Caco-2 (cell line): ENCODE measurements at regions of chr4 and their contacts with region 1.

Region 1: GRCh38 chr4:165327211-165328100 is at the start of gene MSMO1:
- DNase-seq: peak; percentile 98 to 99
- H3K4me3 ChIP-seq: peak within 1 kb of the TSS; percentile 79
- H3K4me3 Mint-ChIP-seq: no peak within 1 kb of the TSS
- H3K27ac Mint-ChIP-seq: no peak within 1 kb of the TSS
- H3K4me1 ChIP-seq: peaks cover 29% of the 10 kb centered on the region
- H3K4me1 Mint-ChIP-seq: peaks cover 30% of the 10 kb centered on the region
- H3K27me3 ChIP-seq: no peaks in the 10 kb centered on the region
- H3K27me3 Mint-ChIP-seq: no peaks in the 10 kb centered on the region
- CTCF ChIP-seq: no peak
- total RNA-seq, gene MSMO1: 80.5 and 91.1 TPM in 2 replicates

Region 2: DNA sequence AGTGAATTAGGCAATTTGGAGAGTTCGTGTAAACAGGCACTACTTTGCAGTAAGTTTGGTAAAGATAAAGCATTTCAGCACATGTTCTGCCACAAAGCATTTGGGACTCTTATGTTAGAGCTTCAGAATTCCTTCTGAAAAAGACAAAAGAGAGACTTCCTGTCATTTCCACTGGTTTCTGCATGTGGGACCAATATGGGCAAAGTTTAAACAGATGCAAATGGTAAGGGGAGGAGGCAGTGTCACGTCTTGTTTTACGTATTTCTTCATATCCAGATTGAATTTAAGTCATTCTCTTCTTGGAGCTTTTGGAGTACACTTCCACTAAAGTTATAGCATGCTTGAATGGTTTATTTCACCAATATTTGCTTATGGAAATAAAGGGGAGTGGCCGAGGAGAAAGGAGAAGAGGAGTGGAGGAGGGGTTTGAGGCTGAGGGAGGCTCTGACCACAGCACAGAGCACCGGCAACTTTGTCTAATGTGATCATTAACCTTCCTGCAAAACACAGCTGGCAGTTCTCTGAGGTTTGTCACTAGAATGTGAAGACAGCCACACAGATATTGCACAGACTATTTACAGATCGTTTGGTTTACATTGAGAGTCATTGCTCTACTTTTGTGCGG is 450.6 kb before region 1 on chr4 and contains the start of gene APELA:
- CTCF ChIA-PET with region 1: no interaction called
- POLR2A ChIA-PET with region 1: no interaction called
- intact Hi-C with region 1: loop called (anchors 5 kb)
- DNase-seq: peak; percentile 71 to 74
- H3K4me3 ChIP-seq: peak within 1 kb of the TSS; percentile 26
- H3K4me3 Mint-ChIP-seq: peak within 1 kb of the TSS; percentile 74
- H3K27ac Mint-ChIP-seq: peak within 1 kb of the TSS; percentile 81
- H3K4me1 ChIP-seq: peaks cover 62% of the 10 kb centered on the region
- H3K4me1 Mint-ChIP-seq: peaks cover 26% of the 10 kb centered on the region
- H3K27me3 ChIP-seq: no peaks in the 10 kb centered on the region
- H3K27me3 Mint-ChIP-seq: no peaks in the 10 kb centered on the region
- CTCF ChIP-seq: no peak
- total RNA-seq, gene APELA: 30.6 and 34.8 TPM in 2 replicates

Region 3: DNA sequence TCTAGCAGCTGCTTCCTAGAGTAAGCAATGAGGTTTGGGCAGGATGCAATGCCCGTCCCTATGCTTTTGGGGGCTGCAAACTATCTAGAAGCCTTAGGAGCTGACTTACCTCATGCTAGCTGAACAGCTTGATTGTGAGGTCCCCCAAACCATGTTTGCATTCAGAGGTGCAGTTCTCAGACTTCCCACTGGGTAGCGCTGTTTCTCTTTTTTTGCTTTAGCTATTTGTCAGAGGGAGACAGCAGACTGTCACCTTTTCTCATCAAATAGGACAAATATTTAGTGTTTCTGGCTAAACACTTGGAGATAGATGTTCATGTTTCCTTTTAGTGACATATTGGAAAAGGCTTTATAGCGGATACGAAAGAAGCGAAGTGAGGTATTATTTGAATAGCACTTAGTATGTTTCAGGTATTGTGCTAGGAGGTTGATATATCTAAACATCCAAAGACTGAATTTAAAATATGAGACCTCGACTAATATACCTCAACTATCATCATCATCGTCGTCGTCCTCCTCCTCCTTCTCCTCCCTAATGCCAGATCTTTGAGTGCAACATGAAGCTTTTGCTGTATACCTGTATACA is 196.1 kb before region 1 on chr4:
- CTCF ChIA-PET with region 1: interaction called, 6 read pairs
- POLR2A ChIA-PET with region 1: no interaction called
- intact Hi-C with region 1: loop called (anchors 1 kb)
- DNase-seq: peak; percentile 64 to 80
- H3K4me3 ChIP-seq: no peak overlapping the region
- H3K4me3 Mint-ChIP-seq: no peak overlapping the region
- H3K27ac Mint-ChIP-seq: no peak overlapping the region
- H3K4me1 ChIP-seq: no peaks in the 10 kb centered on the region
- H3K4me1 Mint-ChIP-seq: peaks cover 14% of the 10 kb centered on the region
- H3K27me3 ChIP-seq: no peaks in the 10 kb centered on the region
- H3K27me3 Mint-ChIP-seq: peaks cover 14% of the 10 kb centered on the region
- CTCF ChIP-seq: peak; percentile 73 to 82

Region 4: GRCh38 chr4:165207431-165208220 is 119.8 kb before region 1 on chr4 and contains the start of gene KLHL2:
- CTCF ChIA-PET with region 1: interaction called, 7 read pairs
- POLR2A ChIA-PET with region 1: interaction called, 4 read pairs
- intact Hi-C with region 1: loop called (anchors 2 kb)
- DNase-seq: peak; percentile 74 to 83
- H3K4me3 ChIP-seq: peak within 1 kb of the TSS; percentile 85
- H3K4me3 Mint-ChIP-seq: peak within 1 kb of the TSS; percentile 74
- H3K27ac Mint-ChIP-seq: peak within 1 kb of the TSS; percentile 49
- H3K4me1 ChIP-seq: peaks cover 25% of the 10 kb centered on the region
- H3K4me1 Mint-ChIP-seq: peaks cover 27% of the 10 kb centered on the region
- H3K27me3 ChIP-seq: no peaks in the 10 kb centered on the region
- H3K27me3 Mint-ChIP-seq: no peaks in the 10 kb centered on the region
- CTCF ChIP-seq: no peak
- total RNA-seq, gene KLHL2: 14.5 and 15.9 TPM in 2 replicates